ENCODE measurements at regions of chr5 and their contacts with region 1.

Region 1: DNA sequence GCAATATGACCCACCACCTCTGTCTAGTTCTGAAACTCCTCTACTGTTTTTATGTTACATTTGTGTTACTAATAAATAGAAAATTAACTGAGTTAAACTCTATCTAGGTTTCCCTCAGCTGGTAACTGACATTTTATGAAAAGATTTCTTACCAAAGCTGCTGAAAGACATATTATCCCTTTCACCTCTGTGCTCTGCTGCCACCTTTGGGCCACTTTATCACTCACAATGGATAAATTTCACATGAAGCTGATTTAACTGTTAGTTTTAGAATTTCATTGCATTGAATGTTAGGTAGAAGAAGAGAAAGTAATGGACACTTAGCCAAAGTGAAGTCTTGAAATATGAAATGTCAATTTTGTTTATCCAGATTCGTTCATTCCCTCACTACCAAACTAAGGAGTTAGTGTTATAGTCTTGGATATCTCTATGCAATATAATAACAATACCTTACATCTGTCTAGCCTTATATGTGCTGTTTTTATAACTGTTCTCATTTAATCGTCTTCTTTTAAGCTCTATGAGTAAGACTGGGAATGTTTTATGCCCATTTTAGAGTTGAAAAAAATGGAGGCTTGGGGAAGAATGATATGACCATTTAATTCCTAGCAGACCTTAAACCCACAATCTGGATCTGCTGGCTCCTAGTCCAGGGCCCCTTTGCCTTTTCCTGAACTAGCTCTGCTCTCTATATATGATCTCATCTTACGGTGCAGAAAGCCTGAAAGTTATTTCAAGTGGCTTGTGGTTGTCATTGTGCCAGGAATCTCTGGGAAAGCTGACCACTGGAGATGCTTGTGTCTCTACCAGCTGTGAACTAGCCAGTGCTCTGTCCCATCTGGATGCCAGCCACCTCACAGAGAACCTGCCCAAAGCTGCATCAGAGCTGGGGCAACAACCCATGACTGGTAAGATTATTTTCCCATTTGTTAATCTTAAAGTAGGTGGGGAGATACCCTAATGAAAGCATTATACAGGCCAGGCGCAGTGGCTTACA is 97.1 kb downstream of the GOLPH3 start:
- DNase-seq: no peak
- H3K4me3 ChIP-seq: no peak overlapping the region
- H3K27ac ChIP-seq: no peak overlapping the region
- H3K4me1 ChIP-seq: peaks cover 0 to 10% (median 0%) of the 10 kb centered on the region in 4 donors
- H3K27me3 ChIP-seq: no peaks in the 10 kb centered on the region
- CTCF ChIP-seq: peak; percentile 60 to 77 (median 62)
- EP300 ChIP-seq: no peak
- POLR2A ChIP-seq: no peak

Region 2: DNA sequence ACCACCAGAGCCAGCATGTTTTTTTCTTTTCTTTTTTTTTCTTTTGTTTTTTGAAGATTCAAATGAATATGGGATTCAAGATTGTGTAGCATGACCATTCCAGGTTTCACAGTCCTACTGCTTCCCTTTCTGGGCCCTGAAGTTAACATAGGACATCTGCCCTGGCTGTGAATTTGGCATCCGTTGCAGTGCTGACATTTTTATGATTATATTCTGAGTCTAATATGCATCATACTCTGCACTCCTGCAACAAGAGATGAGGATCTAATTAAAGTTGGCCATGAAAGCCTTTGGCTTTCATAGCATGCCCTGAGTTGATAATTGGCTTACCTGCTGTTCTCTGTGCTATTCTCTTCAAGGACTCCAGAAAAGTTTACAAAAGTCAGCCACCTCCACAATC is 515.1 kb before region 1 on chr5:
- intact Hi-C with region 1: no loop called
- DNase-seq: no peak
- H3K4me3 ChIP-seq: no peak overlapping the region
- H3K27ac ChIP-seq: no peak overlapping the region
- H3K4me1 ChIP-seq: peaks cover 0 to 22% (median 19%) of the 10 kb centered on the region in 4 donors
- H3K27me3 ChIP-seq: no peaks in the 10 kb centered on the region
- CTCF ChIP-seq: no peak
- EP300 ChIP-seq: no peak
- POLR2A ChIP-seq: no peak

Region 3: DNA sequence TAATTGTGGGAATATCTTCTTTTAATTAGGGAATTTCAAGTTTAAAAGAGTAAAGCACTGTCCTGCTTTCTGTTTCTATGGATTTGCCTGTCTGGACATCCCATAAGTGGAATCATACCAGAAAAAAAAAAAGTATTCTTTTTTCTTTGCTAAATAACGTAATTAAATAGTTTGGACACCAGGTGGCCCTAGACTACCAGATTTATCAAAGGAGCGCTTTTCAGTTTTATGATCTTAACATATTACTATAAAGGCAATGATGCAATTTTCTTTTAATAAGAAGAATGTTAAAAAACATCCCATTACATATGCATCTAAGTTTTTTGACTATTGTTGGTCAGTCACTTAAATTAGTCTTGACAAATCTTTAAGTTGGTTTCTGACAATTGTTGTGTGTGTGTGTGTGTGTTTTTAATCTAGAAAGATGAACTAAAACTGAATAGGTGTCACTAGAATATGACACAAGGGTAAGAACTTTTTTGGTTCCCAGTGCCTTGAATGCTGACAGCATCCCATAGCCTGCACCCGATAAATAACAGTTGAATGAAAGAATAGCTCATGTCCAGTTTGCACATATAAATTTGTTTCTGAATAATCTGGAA is 495.4 kb before region 1 on chr5:
- intact Hi-C with region 1: loop called (anchors 5 kb)
- DNase-seq: no peak
- H3K4me3 ChIP-seq: no peak overlapping the region
- H3K27ac ChIP-seq: no peak overlapping the region
- H3K4me1 ChIP-seq: no peaks in the 10 kb centered on the region
- H3K27me3 ChIP-seq: no peaks in the 10 kb centered on the region
- CTCF ChIP-seq: peak in 2 of 4 experiments; percentile 23
- EP300 ChIP-seq: no peak
- POLR2A ChIP-seq: no peak

Region 4: GRCh38 chr5:31825518-31826068 is 251.4 kb before region 1 on chr5:
- intact Hi-C with region 1: loop called (anchors 2 kb)
- DNase-seq: peak; percentile 68
- H3K4me3 ChIP-seq: no peak overlapping the region
- H3K27ac ChIP-seq: no peak overlapping the region
- H3K4me1 ChIP-seq: no peaks in the 10 kb centered on the region
- H3K27me3 ChIP-seq: peaks cover 0 to 4% (median 0%) of the 10 kb centered on the region in 3 donors
- CTCF ChIP-seq: peak; percentile 25 to 59 (median 46)
- EP300 ChIP-seq: no peak
- POLR2A ChIP-seq: no peak

Region 5: DNA sequence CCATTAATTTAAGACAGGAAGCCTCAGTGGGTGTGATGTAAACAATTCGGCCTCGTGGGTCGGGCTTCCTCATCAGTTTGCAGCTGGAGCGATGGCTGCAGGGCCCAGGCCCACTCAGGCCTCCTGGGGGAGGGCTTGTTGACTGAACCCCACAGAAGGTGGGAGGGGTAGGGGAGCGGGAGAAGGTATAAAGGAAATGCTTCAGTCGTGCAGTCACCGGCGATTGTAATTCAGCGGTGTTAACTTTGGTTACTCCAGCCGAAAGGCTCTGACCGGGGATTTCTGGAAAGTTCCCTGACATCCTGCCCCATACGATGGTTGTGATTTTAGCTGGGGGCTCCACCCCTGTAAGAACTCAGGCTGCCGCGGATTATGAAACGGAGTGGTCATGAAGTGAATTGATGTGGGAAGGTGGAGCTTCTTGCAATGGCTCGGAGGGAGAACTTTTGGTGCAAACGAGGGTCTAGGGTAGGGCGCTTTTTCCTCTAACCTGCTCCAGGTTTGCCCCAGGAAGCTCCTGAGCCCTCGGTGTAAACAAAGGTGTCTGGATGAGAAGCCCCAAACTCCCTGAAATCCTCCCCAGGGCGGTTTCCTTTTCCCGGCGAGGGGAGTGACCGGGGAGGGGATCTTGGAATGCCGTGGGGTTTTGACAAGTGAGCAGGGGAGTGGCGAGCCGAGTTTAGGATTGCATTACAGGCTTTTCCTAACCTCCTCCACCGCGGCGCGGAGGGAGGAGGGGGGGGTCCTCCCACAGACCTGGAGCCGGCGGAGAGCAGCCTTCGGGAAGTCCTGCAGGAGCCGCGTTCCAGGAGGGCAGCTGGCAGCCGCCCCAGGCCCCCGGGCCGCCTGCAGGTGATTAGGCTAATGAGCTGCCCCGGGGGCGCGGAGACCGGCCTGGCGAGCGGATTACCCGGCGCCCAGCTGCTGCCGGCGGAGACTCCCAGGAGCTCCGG is 222.5 kb before region 1 on chr5:
- intact Hi-C with region 1: loop called (anchors 10 kb)
- DNase-seq: peak; percentile 73
- H3K4me3 ChIP-seq: peak overlapping the region; percentile 54 to 60 (median 56)
- H3K27ac ChIP-seq: peak overlapping the region; percentile 58 to 72 (median 65)
- H3K4me1 ChIP-seq: peaks cover 0 to 22% (median 13%) of the 10 kb centered on the region in 4 donors
- H3K27me3 ChIP-seq: peaks cover 0 to 26% (median 0%) of the 10 kb centered on the region in 3 donors
- CTCF ChIP-seq: no peak
- EP300 ChIP-seq: no peak
- POLR2A ChIP-seq: no peak

Region 6: DNA sequence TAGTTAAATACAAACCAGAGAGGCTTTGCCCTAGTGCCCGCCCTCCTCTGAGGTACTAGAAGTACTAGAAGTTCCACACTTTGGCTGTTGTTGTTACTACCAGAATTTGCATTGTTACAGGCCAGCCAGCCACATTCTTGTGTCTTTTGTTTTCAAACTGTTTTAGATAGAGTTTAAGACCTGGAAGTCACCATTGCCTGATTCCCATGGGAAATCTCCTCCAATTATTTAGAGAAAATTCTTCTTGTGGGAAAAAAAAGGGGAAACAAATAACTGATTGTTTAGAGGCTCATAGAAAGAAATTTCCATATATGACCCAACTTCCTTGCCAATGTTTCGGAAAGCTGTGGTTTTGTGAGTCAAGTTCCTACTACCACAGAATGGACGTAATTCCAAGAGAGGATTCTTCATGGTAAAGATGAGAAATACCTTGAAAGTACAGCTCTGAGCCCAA is 155.1 kb before region 1 on chr5:
- intact Hi-C with region 1: loop called (anchors 10 kb)
- DNase-seq: no peak
- H3K4me3 ChIP-seq: no peak overlapping the region
- H3K27ac ChIP-seq: no peak overlapping the region
- H3K4me1 ChIP-seq: no peaks in the 10 kb centered on the region
- H3K27me3 ChIP-seq: no peaks in the 10 kb centered on the region
- CTCF ChIP-seq: no peak
- EP300 ChIP-seq: no peak
- POLR2A ChIP-seq: no peak

Measured in sigmoid colon (tissue), 7 donors.